A549 (cell line): ENCODE measurements at regions of chr7 and their contacts with region 1.

Region 1: GRCh38 chr7:134547397-134548054 is 1.4 kb upstream of the AKR1B15 start:
- DNase-seq: peak; percentile 85 to 97
- ATAC-seq: peak; percentile 54 to 74
- H3K4me3 ChIP-seq: peak overlapping the region; percentile 24
- H3K27ac ChIP-seq: peak overlapping the region; percentile 79 to 86
- H3K4me1 ChIP-seq: peaks cover 64% of the 10 kb centered on the region
- CTCF ChIP-seq: peak; percentile 100
- EP300 ChIP-seq: no peak
- POLR2A ChIP-seq: no peak
- RAD21 ChIP-seq: peak; percentile 84 to 86

Region 2: DNA sequence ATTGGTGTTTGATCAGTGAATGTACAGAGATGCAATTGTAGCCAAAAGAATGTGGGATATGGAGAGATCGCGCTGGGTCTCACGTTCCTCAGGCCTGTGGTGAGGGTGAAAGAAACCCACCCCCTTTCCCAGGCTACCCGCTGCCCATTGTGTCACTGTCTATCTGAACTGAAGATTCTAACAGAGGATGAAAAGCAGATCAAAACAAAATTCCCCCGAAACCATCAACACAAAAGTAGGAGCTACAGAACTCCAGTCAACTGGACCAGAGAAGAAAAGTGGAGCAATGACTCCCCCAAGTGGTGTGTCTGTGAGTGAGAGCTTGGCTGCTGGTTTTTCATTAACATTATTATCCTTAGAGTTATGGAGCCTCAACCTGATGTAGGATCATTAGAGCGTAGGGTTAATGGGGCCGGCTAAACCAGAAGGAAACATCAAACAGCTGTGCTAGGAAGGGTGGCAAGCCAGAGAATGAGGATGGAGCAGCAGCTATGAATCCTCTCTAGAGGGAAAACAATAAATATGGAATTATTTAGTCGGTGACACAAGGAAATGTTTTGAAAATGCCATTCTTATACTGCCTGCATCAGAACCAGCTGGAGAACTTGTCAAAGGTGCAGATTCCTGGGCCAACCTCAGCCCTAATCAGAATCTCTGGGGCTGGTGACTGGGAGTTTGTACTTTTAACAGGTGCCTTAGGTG is 127.0 kb before region 1 on chr7:
- CTCF ChIA-PET with region 1: interaction called, 12 read pairs
- POLR2A ChIA-PET with region 1: no interaction called
- DNase-seq: peak; percentile 88 to 92
- ATAC-seq: peak; percentile 78 to 86
- H3K4me3 ChIP-seq: no peak overlapping the region
- H3K27ac ChIP-seq: peak overlapping the region; percentile 79 to 87
- H3K4me1 ChIP-seq: peaks cover 64% of the 10 kb centered on the region
- CTCF ChIP-seq: peak; percentile 99
- EP300 ChIP-seq: no peak
- POLR2A ChIP-seq: no peak
- RAD21 ChIP-seq: peak; percentile 99 to 100

Region 3: DNA sequence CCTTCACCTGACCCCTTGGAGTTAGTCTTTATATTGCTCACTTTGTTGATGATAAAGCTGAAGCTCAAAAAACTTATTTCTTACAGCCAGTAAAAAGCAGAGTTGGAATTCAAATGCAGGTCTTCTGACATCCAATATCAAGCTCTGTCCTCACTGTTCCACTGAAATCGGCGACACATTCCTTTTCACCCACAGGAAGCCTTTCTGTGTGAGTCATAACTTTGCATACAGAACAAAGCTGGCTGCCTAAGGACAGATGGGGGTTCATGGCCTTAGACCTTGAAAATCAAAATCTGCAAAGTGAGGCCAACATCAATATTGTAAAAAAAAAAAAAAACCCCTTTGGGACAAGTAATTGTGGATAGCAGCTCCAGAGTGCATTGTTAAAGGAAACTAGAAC is 66.8 kb before region 1 on chr7:
- CTCF ChIA-PET with region 1: interaction called, 14 read pairs
- POLR2A ChIA-PET with region 1: no interaction called
- DNase-seq: peak; percentile 59 to 82
- ATAC-seq: peak; percentile 83 to 86
- H3K4me3 ChIP-seq: no peak overlapping the region
- H3K27ac ChIP-seq: peak overlapping the region; percentile 62 to 67
- H3K4me1 ChIP-seq: peaks cover 60% of the 10 kb centered on the region
- CTCF ChIP-seq: no peak
- EP300 ChIP-seq: no peak
- POLR2A ChIP-seq: no peak
- RAD21 ChIP-seq: peak; percentile 13 to 18; a peak in 1 of 5 replicates

Region 4: GRCh38 chr7:134571746-134572461 is 24.4 kb after region 1 on chr7:
- CTCF ChIA-PET with region 1: interaction called, 37 read pairs
- POLR2A ChIA-PET with region 1: no interaction called
- DNase-seq: no peak
- ATAC-seq: no peak
- H3K4me3 ChIP-seq: no peak overlapping the region
- H3K27ac ChIP-seq: no peak overlapping the region
- H3K4me1 ChIP-seq: peaks cover 2% of the 10 kb centered on the region; the same call in 1 of the 3 replicates
- CTCF ChIP-seq: no peak
- EP300 ChIP-seq: no peak
- POLR2A ChIP-seq: no peak
- RAD21 ChIP-seq: no peak

Region 5: GRCh38 chr7:134593530-134594392 is 46.2 kb after region 1 on chr7:
- CTCF ChIA-PET with region 1: interaction called, 28 read pairs
- POLR2A ChIA-PET with region 1: interaction called, 4 read pairs
- DNase-seq: peak; percentile 63 to 98
- ATAC-seq: peak; percentile 94 to 96
- H3K4me3 ChIP-seq: no peak overlapping the region
- H3K27ac ChIP-seq: peak overlapping the region; percentile 87 to 90
- H3K4me1 ChIP-seq: peaks cover 37% of the 10 kb centered on the region
- CTCF ChIP-seq: no peak
- EP300 ChIP-seq: peak; percentile 63 to 86; a peak in 3 of 5 replicates
- POLR2A ChIP-seq: no peak
- RAD21 ChIP-seq: peak; percentile 27 to 55; a peak in 4 of 5 replicates

Region 6: GRCh38 chr7:134605973-134606923 is 58.7 kb after region 1 on chr7:
- CTCF ChIA-PET with region 1: interaction called, 92 read pairs
- POLR2A ChIA-PET with region 1: interaction called, 3 read pairs
- DNase-seq: peak; percentile 62 to 81
- ATAC-seq: peak; percentile 89 to 94
- H3K4me3 ChIP-seq: no peak overlapping the region
- H3K27ac ChIP-seq: peak overlapping the region; percentile 64 to 82
- H3K4me1 ChIP-seq: peaks cover 47% of the 10 kb centered on the region
- CTCF ChIP-seq: peak; percentile 99
- EP300 ChIP-seq: no peak; a peak in 1 of 5 replicates
- POLR2A ChIP-seq: no peak
- RAD21 ChIP-seq: peak; percentile 100

Region 7: DNA sequence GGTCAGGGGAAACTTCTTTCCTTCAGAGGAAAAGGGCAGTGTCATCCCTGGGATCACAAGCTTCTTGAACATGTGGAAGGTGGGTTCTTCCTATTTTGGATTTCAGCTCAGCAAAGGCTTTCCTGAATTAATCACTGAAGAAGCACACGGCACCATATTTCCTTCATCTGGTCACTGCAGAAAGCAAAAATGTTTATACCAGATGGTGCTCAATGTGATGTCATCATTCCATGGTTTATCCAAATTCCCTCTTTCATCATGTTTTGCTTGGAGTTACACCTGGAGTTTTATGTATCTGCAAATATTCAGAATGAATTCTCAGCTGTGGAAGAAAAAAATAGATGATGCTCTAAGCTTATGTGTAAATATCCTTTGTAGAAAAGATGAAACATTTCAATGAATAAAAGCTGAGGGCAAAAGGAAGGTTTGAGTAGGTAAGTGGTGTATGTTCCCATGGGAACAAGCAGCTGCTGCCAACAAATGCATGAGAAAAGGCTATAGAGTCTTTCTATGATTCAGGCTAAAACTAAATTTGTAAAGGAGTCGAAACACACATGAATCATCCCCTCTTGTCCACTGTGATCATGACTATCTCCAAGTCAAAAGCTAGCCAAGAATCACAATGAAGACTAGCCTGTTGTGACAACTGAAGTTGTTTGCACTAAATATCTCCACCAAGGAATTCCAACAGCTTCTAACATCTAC is 72.3 kb after region 1 on chr7:
- CTCF ChIA-PET with region 1: interaction called, 10 read pairs
- POLR2A ChIA-PET with region 1: interaction called, 3 read pairs
- DNase-seq: peak in 1 of 2 experiments; percentile 66
- ATAC-seq: peak; percentile 83 to 86
- H3K4me3 ChIP-seq: no peak overlapping the region
- H3K27ac ChIP-seq: peak overlapping the region; percentile 44 to 54; a peak in 5 of 6 replicates
- H3K4me1 ChIP-seq: peaks cover 25% of the 10 kb centered on the region
- CTCF ChIP-seq: no peak
- EP300 ChIP-seq: no peak
- POLR2A ChIP-seq: no peak
- RAD21 ChIP-seq: no peak